ENCODE measurements at regions of chr18 and their contacts with region 1.

Region 1: DNA sequence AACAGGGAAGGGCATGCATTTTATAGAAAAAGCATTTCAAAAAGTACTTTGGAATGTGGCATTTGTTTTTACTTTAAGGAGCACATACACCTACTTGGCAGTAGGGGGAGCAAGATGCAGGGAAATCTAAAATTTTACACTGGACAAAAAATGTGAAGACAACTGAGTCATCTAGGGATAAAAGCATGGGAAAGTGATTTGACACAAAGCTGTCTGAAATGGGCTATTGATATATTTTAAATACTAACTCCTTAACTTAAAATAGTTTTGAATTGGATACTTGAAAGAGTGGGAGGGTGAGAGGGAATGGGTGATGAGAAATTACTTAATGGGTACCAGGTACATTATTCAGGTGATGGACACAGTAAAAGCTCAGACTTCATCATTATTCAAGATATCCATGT is 15.8 kb downstream of the TMEM200C start:
- DNase-seq: peak; percentile 58
- ATAC-seq: peak; percentile 57
- H3K4me3 ChIP-seq: no peak overlapping the region
- H3K27ac ChIP-seq: no peak overlapping the region
- H3K4me1 ChIP-seq: no peaks in the 10 kb centered on the region
- H3K27me3 ChIP-seq: peaks cover 4% of the 10 kb centered on the region; the same call in 1 of the 2 replicates
- CTCF ChIP-seq: peak; percentile 90

Region 2: DNA sequence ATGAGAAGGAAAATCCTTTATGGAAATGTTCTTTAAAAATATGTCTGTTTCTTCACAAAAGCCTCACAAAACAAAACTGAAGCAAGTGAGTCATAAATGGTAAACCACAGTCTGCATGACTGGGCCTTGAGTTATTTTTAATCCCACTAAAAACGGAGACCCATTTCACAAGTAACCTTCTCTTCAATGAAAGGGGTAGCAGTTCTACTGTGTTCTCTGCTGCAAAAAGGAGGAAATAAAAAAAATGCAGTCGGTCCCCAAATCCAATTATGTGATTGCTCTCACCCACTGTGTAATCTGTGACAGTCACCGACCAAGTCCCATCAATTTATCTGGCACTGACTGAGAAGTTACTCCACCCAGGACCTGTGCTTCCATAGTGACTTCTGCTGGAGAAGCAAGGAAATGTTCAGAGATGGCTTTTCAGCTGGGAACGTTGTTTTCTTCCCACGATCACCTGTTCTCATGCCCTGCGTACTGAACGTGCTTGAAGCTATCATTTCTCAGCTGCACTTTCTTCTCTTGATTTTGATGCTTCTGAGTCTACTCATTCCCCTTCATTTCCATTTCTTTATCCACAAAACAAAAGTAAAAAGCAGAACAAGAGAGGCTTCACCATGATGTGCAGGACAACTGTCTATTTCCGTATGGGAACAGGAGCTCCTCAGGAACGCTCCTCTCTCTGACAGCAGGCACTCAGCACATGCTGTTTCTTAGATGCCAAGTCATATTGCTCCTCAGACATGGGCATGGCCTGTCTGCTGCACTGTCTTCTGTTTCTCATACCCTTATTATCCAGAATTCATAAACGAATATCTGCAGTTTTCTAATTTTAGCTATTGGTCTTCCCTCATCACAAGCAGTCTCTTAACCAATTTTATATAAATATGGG is 95.9 kb after region 1 on chr18:
- CTCF ChIA-PET with region 1: no interaction called
- POLR2A ChIA-PET with region 1: interaction called, 3 read pairs
- intact Hi-C with region 1: loop called (anchors 5 kb)
- DNase-seq: peak; percentile 74
- ATAC-seq: peak; percentile 83
- H3K4me3 ChIP-seq: no peak overlapping the region
- H3K27ac ChIP-seq: peak overlapping the region; percentile 30
- H3K4me1 ChIP-seq: peaks cover 14% of the 10 kb centered on the region
- H3K27me3 ChIP-seq: no peaks in the 10 kb centered on the region
- CTCF ChIP-seq: peak; percentile 56

Region 3: DNA sequence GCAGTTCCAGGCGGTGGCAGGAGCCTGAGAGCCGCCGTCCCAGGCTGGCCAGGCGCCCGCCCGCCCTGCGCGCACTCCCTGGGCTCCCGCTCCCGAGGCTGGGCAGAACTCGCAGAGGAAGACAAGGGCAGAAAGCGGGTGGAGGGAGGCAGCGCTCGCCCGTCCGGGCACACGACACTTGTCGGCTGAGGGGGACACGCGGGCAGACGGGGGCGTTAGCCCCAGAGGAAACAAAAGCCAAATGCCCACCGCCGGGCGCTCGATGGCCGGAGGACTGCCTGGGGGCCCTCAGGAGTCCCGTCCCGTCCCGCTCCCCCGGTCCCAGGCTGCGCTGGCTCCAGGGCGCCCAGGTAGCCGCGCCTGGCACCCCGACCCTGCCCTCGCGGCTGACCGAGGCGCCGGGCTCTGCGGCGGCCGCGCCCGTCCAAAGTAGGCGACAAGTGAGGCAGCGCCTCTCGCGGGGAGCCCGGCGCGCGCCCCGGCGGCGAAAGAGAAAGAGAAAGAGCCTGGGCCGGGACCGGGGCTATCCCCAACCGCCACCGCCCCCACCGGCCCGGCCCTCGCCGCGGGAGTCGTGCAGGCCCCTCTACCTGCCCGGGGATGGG is 534.7 kb after region 1 on chr18:
- CTCF ChIA-PET with region 1: no interaction called
- POLR2A ChIA-PET with region 1: no interaction called
- intact Hi-C with region 1: loop called (anchors 5 kb)
- DNase-seq: peak; percentile 16
- ATAC-seq: peak; percentile 75
- H3K4me3 ChIP-seq: peak overlapping the region; percentile 64
- H3K27ac ChIP-seq: no peak overlapping the region
- H3K4me1 ChIP-seq: 0 out of 2 replicates have a peak, but pooled peaks cover 4% of the 10 kb centered on the region
- H3K27me3 ChIP-seq: peaks cover 9% of the 10 kb centered on the region; the same call in 1 of the 2 replicates
- CTCF ChIP-seq: no peak

Region 4: GRCh38 chr18:6521795-6522418 is 642.4 kb after region 1 on chr18:
- CTCF ChIA-PET with region 1: interaction called, 7 read pairs
- POLR2A ChIA-PET with region 1: no interaction called
- intact Hi-C with region 1: loop called (anchors 1 kb)
- DNase-seq: peak; percentile 85
- ATAC-seq: peak; percentile 84
- H3K4me3 ChIP-seq: no peak overlapping the region
- H3K27ac ChIP-seq: no peak overlapping the region
- H3K4me1 ChIP-seq: no peaks in the 10 kb centered on the region
- H3K27me3 ChIP-seq: no peaks in the 10 kb centered on the region
- CTCF ChIP-seq: peak; percentile 94

Region 5: GRCh38 chr18:6885992-6886796 is 1006.7 kb after region 1 on chr18:
- CTCF ChIA-PET with region 1: no interaction called
- POLR2A ChIA-PET with region 1: no interaction called
- intact Hi-C with region 1: loop called (anchors 2 kb)
- DNase-seq: peak; percentile 73
- ATAC-seq: peak; percentile 96
- H3K4me3 ChIP-seq: no peak overlapping the region
- H3K27ac ChIP-seq: no peak overlapping the region
- H3K4me1 ChIP-seq: no peaks in the 10 kb centered on the region
- H3K27me3 ChIP-seq: no peaks in the 10 kb centered on the region
- CTCF ChIP-seq: peak; percentile 90